ENCODE measurements at regions of chr18 and their contacts with region 1.

Region 1: DNA sequence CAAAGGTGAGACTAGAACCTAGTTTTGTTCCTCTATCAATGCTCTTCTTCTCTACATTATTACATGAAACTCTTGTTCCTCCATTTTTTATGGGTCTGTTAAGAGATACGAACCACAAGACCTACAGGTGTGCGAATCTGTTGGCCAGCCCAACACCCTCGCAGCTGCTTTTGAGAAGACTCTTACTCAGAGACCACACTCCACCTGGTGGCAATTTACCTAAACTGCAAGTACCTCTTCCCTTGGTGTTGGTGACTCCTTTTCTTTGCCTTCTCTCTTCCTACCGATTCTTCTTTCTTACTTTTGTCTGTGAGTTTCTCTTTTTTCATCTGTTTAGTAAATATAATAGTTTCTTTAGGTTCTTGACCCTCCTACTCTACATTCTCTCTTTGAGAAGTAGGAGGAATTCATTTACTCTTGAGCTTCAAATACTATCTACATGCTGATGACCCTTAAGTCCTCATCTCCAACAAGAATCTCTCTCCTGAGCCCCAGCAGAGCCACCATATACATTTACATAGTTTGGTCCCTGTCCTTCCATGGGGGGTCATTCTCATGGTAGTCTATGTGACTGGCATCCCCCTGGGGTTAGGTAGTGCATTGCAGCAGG is 81.8 kb upstream of the GAREM1 start:
- DNase-seq: no peak
- H3K4me3 ChIP-seq: no peak overlapping the region
- H3K27ac ChIP-seq: no peak overlapping the region
- H3K4me1 ChIP-seq: no peaks in the 10 kb centered on the region
- H3K27me3 ChIP-seq: peaks cover 0 to 4% (median 0%) of the 10 kb centered on the region in 7 donors
- CTCF ChIP-seq: peak; percentile 31 to 83 (median 70)
- POLR2A ChIP-seq: no peak

Region 2: DNA sequence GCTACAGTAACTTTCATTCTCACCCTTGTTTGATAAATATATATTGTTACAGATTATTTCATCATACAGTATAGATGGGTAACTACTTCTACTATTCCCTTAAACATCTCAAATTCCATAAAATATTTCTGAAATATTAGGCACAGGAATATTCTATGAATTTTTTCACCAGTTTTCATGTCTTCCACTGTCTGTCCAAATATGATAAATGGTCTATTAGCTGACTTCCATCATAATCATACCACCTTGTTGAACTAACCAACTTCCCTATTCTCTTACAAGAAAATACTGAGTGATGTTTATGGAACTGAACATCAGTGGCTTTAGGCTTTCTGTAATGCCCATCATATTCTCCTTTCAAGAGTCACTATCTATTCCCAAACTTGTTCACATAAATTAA is 692.0 kb before region 1 on chr18:
- intact Hi-C with region 1: no loop called
- DNase-seq: no peak
- H3K4me3 ChIP-seq: no peak overlapping the region
- H3K27ac ChIP-seq: no peak overlapping the region
- H3K4me1 ChIP-seq: peaks cover 0 to 7% (median 0%) of the 10 kb centered on the region in 6 donors
- H3K27me3 ChIP-seq: no peaks in the 10 kb centered on the region
- CTCF ChIP-seq: no peak
- POLR2A ChIP-seq: no peak

Region 3: GRCh38 chr18:32158108-32158624 is 394.4 kb before region 1 on chr18:
- intact Hi-C with region 1: loop called (anchors 5 kb)
- DNase-seq: peak; percentile 85
- H3K4me3 ChIP-seq: peak overlapping the region in 5 of 8 donors; percentile 4 to 59 (median 20)
- H3K27ac ChIP-seq: no peak overlapping the region
- H3K4me1 ChIP-seq: peaks cover 0 to 13% (median 11%) of the 10 kb centered on the region in 6 donors
- H3K27me3 ChIP-seq: peaks cover 0 to 24% (median 0%) of the 10 kb centered on the region in 7 donors
- CTCF ChIP-seq: peak; percentile 51 to 90 (median 77)
- POLR2A ChIP-seq: no peak

Measured in spleen (tissue), 13 donors.